Activated T-helper 2 cell treated with anti-CD3 and anti-CD28 coated beads, Interferon-gamma antibody, Interleukin-2, Interleukin-4, amounts not matched to agents 10 μg/mL and 5 μg/mL and 100 μg/mL, durations not matched to agents 14 hours and 24 hours and 36 hours (primary cell): ENCODE measurements at regions of chr5 and their contacts with region 1.

Region 1: DNA sequence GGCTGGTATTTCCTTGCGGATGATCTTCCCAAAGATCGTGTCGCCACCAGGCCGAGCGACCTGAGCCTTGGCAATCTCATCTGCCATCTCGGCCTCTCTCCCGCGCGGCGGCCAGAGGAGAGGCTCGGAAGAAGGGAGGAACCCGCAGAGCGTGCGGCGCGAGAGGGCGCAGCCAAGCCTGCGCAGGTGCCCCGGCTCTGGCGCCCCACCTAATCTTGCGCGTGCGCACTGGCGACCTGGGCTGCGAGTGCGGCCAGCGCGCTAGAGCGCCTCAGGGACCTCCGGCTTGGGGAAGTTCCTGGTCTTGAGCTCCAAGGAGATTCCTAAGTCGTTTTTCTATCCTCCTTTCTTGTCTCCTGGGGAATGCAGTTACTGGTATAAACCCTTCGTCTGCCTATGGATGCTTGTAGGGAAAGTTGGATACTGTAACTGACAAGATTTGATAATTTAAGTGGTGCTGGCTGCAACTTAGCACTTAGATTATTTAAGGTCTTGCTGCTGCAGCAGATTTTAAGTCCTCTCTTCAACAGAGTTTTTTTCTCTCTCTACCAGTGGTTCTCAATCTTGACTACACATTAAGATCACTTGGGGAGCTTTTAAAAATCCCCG is at the start of gene HINT1:
- DNase-seq: peak; percentile 91
- H3K4me3 Mint-ChIP-seq: peak within 1 kb of the TSS; percentile 96
- H3K27ac Mint-ChIP-seq: peak within 1 kb of the TSS; percentile 99
- H3K4me1 Mint-ChIP-seq: peaks cover 49% of the 10 kb centered on the region
- H3K27me3 Mint-ChIP-seq: no peaks in the 10 kb centered on the region
- total RNA-seq, gene HINT1: 279 and 282 TPM in 2 replicates

Region 2: DNA sequence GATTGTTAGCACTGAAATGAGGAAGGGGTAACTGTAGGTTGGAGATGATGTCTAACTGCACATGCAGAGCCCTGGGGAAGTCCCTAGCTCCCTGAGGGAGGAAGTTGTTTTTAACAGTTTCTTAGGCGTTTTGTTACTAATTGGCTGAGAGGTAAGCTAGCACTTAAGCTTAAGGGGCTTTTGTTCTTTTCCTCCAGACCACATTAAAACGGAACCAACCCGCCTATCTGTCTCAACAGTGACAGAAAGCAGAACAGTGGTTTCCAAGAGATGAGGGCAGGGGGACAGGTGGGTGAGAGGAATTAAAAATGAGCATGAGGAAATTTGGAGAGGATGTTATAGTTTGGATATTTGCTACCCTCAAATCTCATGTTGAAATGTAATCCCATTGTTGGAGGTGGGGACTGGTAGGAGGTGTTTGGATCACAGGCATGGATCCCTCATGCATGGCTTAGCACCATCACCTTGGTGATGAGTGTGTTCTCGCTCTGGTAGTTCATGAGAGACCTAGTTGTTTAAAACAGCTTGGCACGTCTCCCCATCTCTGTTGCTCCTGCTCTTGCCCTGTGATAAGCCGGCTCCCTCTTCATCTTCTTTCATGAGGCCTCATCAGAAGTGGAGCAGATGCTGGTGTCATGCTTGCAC is 44.4 kb after region 1 on chr5:
- intact Hi-C with region 1: loop called (anchors 1 kb)
- DNase-seq: peak; percentile 40
- H3K4me3 Mint-ChIP-seq: peak overlapping the region; percentile 80
- H3K27ac Mint-ChIP-seq: peak overlapping the region; percentile 96
- H3K4me1 Mint-ChIP-seq: peaks cover 53% of the 10 kb centered on the region
- H3K27me3 Mint-ChIP-seq: no peaks in the 10 kb centered on the region

Region 3: DNA sequence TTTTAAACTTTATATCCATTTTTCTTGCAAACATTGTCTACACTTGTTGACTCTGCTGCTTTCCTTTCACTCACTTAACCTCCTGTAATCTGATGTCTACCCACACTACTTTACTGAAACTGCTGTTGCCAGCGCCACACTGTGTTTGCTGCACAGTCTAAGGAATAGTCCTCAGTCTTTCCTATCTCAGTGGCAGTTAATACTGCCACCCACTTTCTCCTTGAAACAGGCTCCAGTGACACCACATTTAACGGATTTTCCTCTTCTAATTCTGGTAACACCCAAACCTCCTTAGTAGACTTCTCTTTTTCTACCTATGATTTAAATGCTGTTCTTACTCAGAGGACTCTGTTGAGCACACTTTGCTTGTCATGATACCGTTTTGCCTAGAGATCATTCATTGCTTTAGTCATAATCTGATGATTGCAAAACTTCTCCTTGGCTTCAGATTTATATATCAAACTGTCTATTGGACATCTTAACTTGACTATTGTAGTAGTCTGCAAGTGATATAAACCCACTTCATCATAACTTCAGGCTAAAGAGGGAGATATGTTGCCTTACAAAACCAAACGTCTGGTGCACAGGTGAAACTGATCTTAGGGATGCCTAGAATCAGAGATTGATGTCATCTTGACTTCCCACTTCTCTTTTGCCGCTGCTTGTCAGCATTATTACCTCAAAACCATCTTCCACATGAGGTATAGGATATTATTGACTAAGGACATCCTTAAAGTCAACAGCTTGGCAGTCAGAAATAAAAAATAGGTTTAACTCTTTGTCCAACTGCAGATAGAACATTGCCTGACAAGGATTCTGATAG is 192.7 kb after region 1 on chr5:
- intact Hi-C with region 1: loop called (anchors 1 kb)
- DNase-seq: no peak
- H3K4me3 Mint-ChIP-seq: peak overlapping the region; percentile 41
- H3K27ac Mint-ChIP-seq: peak overlapping the region; percentile 90
- H3K4me1 Mint-ChIP-seq: peaks cover 48% of the 10 kb centered on the region
- H3K27me3 Mint-ChIP-seq: no peaks in the 10 kb centered on the region

Region 4: GRCh38 chr5:131394128-131394527 is 228.9 kb after region 1 on chr5:
- intact Hi-C with region 1: loop called (anchors 1 kb)
- DNase-seq: peak; percentile 45
- H3K4me3 Mint-ChIP-seq: peak overlapping the region; percentile 63
- H3K27ac Mint-ChIP-seq: peak overlapping the region; percentile 94
- H3K4me1 Mint-ChIP-seq: peaks cover 67% of the 10 kb centered on the region
- H3K27me3 Mint-ChIP-seq: no peaks in the 10 kb centered on the region

Region 5: DNA sequence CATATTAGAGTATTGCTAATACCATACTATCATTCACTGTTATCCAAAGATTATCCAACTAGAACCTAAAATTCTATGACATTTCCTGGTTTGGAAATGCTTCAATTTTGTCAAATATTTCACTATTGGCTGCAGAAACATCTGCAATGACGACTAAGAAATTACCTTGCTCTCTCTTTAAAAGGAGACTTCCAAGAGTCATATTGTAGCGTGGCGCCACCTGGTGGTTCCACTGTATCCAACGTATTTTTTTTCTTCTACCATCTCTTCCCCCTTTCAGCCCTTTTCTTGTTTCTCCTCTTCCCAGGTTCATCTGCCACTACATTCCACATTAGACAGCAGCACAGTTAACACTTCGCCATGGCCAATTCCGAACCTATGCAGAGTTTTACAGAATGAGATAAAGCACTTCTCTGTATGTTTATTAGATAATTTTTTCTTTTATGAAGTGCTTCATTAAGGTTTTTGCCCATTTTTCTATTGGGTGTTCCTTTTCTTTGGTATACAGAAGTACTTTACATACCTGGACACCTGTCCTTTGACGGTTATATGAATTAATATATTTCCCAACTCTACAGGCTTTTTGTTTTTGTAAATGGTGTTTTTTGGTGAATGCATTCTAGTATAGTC is 252.1 kb after region 1 on chr5:
- intact Hi-C with region 1: loop called (anchors 1 kb)
- DNase-seq: peak; percentile 66
- H3K4me3 Mint-ChIP-seq: peak overlapping the region; percentile 16
- H3K27ac Mint-ChIP-seq: peak overlapping the region; percentile 56
- H3K4me1 Mint-ChIP-seq: peaks cover 32% of the 10 kb centered on the region
- H3K27me3 Mint-ChIP-seq: no peaks in the 10 kb centered on the region

Region 6: GRCh38 chr5:131589510-131590348 is 424.5 kb after region 1 on chr5:
- intact Hi-C with region 1: no loop called
- DNase-seq: no peak
- H3K4me3 Mint-ChIP-seq: no peak overlapping the region
- H3K27ac Mint-ChIP-seq: no peak overlapping the region
- H3K4me1 Mint-ChIP-seq: peaks cover 35% of the 10 kb centered on the region
- H3K27me3 Mint-ChIP-seq: no peaks in the 10 kb centered on the region